GM12878 (cell line): ENCODE measurements at regions of chr12 and their contacts with region 1.

Region 1: DNA sequence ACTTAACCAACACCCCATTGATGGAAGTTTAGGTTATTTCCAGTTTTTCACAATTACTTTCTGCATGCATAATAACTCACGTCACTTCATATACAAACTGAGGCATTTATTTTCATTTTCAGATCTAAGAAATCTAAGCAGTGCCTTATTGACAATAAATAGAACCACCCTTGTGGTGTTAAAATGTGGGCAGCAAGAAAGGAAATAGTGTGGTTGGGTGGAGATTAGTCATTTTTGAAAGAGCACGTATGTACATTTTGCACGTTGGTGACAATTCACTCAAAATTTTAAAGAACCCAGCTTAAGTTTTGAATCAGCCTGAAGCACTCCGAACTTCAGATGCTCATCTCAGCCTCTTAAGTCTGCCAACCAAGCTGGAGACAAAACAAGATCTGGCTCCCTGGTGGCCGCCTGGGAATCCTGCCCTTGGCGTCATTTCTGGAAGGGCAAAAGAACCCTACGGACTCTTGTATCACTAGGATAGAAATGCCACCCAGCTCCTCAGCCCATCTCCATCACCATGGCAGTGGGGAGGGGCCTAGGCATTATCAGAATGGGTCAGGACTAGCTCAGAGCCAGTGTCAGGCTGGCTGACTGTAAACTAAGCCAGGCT is 89.5 kb upstream of the BCL2L14 start:
- DNase-seq: peak; percentile 98
- ATAC-seq: peak; percentile 90
- H3K4me3 ChIP-seq: peak overlapping the region; percentile 19; the same call in 1 of the 2 replicates
- H3K27ac ChIP-seq: peak overlapping the region; percentile 96
- H3K4me1 ChIP-seq: peaks cover 23% of the 10 kb centered on the region
- H3K27me3 ChIP-seq: no peaks in the 10 kb centered on the region
- CTCF ChIP-seq: no peak
- EP300 ChIP-seq: peak; percentile 99
- POLR2A ChIP-seq: no peak
- RAD21 ChIP-seq: peak; percentile 26; the same call in 1 of the 2 replicates

Region 2: GRCh38 chr12:11969437-11970154 is 11.6 kb before region 1 on chr12:
- CTCF ChIA-PET with region 1: interaction called, 9 read pairs
- POLR2A ChIA-PET with region 1: interaction called, 4 read pairs
- RAD21 ChIA-PET with region 1: interaction called, 8 read pairs
- SMC1A ChIA-PET with region 1: interaction called, 20 read pairs
- in situ Hi-C with region 1: no loop called
- intact Hi-C with region 1: no loop called
- DNase-seq: peak; percentile 47
- ATAC-seq: peak; percentile 92
- H3K4me3 ChIP-seq: no peak overlapping the region
- H3K27ac ChIP-seq: peak overlapping the region; percentile 48
- H3K4me1 ChIP-seq: peaks cover 17% of the 10 kb centered on the region
- H3K27me3 ChIP-seq: no peaks in the 10 kb centered on the region
- CTCF ChIP-seq: no peak
- EP300 ChIP-seq: peak; percentile 13 to 27; a peak in 1 of 4 replicates
- POLR2A ChIP-seq: no peak
- RAD21 ChIP-seq: peak; percentile 25; the same call in 1 of the 2 replicates

Region 3: GRCh38 chr12:11998944-11999315 is 17.7 kb after region 1 on chr12:
- CTCF ChIA-PET with region 1: interaction called, 5 read pairs
- POLR2A ChIA-PET with region 1: interaction called, 8 read pairs
- RAD21 ChIA-PET with region 1: interaction called, 11 read pairs
- SMC1A ChIA-PET with region 1: interaction called, 27 read pairs
- in situ Hi-C with region 1: no loop called
- intact Hi-C with region 1: no loop called
- DNase-seq: no peak
- ATAC-seq: no peak
- H3K4me3 ChIP-seq: no peak overlapping the region
- H3K27ac ChIP-seq: no peak overlapping the region
- H3K4me1 ChIP-seq: no peaks in the 10 kb centered on the region
- H3K27me3 ChIP-seq: no peaks in the 10 kb centered on the region
- CTCF ChIP-seq: no peak
- EP300 ChIP-seq: no peak
- POLR2A ChIP-seq: no peak
- RAD21 ChIP-seq: no peak

Region 4: DNA sequence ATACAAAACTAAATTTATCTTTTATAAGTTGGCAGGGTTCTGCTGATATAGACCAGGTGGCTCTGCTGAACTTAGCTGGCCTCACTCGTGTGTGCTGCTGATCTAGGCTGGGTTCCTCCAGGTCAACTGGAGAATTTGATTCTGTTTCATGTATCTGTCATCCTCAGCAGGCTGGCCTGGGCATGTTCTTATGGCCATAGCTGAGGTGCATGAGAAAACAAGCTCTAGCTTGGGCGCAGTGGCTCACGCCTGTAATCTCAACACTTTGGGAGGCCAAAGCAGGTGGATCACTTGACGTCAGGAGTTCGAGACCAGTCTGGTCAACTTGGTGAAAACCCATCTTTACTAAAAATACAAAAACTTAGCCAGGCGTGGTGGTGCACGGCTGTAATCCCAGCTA is 65.2 kb after region 1 on chr12:
- CTCF ChIA-PET with region 1: no interaction called
- POLR2A ChIA-PET with region 1: no interaction called
- RAD21 ChIA-PET with region 1: no interaction called
- SMC1A ChIA-PET with region 1: no interaction called
- in situ Hi-C with region 1: no loop called
- intact Hi-C with region 1: no loop called
- DNase-seq: no peak
- ATAC-seq: no peak
- H3K4me3 ChIP-seq: no peak overlapping the region
- H3K27ac ChIP-seq: no peak overlapping the region
- H3K4me1 ChIP-seq: no peaks in the 10 kb centered on the region
- H3K27me3 ChIP-seq: no peaks in the 10 kb centered on the region
- CTCF ChIP-seq: no peak
- EP300 ChIP-seq: no peak
- POLR2A ChIP-seq: no peak
- RAD21 ChIP-seq: no peak